Heart right ventricle (tissue), 16 donors: ENCODE measurements at regions of chr5 and their contacts with region 1.

Region 1: GRCh38 chr5:72252574-72253155 is 67.4 kb downstream of the MRPS27 start:
- DNase-seq: no peak
- ATAC-seq: no peak
- H3K4me3 ChIP-seq: no peak overlapping the region
- H3K27ac ChIP-seq: no peak overlapping the region
- H3K4me1 ChIP-seq: peaks cover 0 to 52% (median 38%) of the 10 kb centered on the region in 9 donors
- H3K27me3 ChIP-seq: no peaks in the 10 kb centered on the region
- CTCF ChIP-seq: no peak

Region 2: DNA sequence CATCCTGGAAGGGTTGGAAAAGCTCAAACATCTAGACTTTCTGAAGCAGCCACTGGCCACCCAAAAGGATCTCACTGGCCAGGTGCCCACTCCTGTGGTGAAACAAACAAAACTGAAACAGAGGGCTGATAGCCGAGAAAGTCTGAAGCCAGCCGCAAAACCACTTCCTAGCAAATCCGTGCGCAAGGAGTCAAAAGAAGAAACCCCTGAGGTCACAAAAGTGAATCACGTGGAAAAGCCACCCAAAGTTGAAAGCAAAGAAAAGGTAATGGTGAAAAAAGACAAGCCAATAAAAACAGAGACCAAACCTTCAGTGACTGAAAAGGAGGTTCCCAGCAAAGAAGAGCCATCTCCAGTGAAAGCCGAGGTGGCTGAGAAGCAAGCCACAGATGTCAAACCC is 57.8 kb before region 1 on chr5:
- intact Hi-C with region 1: loop called in 1 of 10 experiments (anchors 10 kb)
- DNase-seq: no peak
- ATAC-seq: no peak
- H3K4me3 ChIP-seq: no peak overlapping the region
- H3K27ac ChIP-seq: no peak overlapping the region
- H3K4me1 ChIP-seq: peaks cover 0 to 11% (median 0%) of the 10 kb centered on the region in 9 donors
- H3K27me3 ChIP-seq: no peaks in the 10 kb centered on the region
- CTCF ChIP-seq: no peak

Region 3: GRCh38 chr5:72307968-72308852 is 55.5 kb after region 1 on chr5:
- intact Hi-C with region 1: loop called in 2 of 10 experiments (anchors 5 to 10 kb)
- DNase-seq: peak; percentile 97 to 98
- ATAC-seq: peak; percentile 98 to 100 (median 99)
- H3K4me3 ChIP-seq: peak overlapping the region; percentile 44 to 82 (median 70)
- H3K27ac ChIP-seq: peak overlapping the region; percentile 68 to 97 (median 94)
- H3K4me1 ChIP-seq: peaks cover 0 to 28% (median 12%) of the 10 kb centered on the region in 9 donors
- H3K27me3 ChIP-seq: no peaks in the 10 kb centered on the region
- CTCF ChIP-seq: peak; percentile 84 to 98 (median 93)

Region 4: GRCh38 chr5:73464016-73464745 is 1211.5 kb after region 1 on chr5:
- intact Hi-C with region 1: no loop called
- DNase-seq: peak in 1 of 2 donors; percentile 37
- ATAC-seq: peak; percentile 59 to 97 (median 94)
- H3K4me3 ChIP-seq: no peak overlapping the region
- H3K27ac ChIP-seq: peak overlapping the region in 3 of 10 donors; percentile 1 to 51 (median 4)
- H3K4me1 ChIP-seq: peaks cover 0 to 13% (median 4%) of the 10 kb centered on the region in 9 donors
- H3K27me3 ChIP-seq: peaks cover 0 to 25% (median 21%) of the 10 kb centered on the region in 7 donors
- CTCF ChIP-seq: no peak